Activated B cell treated with CpG ODN at 0.5 μM for 24 hours (primary cell): ENCODE measurements at regions of chr17 and their contacts with region 1.

Region 1: DNA sequence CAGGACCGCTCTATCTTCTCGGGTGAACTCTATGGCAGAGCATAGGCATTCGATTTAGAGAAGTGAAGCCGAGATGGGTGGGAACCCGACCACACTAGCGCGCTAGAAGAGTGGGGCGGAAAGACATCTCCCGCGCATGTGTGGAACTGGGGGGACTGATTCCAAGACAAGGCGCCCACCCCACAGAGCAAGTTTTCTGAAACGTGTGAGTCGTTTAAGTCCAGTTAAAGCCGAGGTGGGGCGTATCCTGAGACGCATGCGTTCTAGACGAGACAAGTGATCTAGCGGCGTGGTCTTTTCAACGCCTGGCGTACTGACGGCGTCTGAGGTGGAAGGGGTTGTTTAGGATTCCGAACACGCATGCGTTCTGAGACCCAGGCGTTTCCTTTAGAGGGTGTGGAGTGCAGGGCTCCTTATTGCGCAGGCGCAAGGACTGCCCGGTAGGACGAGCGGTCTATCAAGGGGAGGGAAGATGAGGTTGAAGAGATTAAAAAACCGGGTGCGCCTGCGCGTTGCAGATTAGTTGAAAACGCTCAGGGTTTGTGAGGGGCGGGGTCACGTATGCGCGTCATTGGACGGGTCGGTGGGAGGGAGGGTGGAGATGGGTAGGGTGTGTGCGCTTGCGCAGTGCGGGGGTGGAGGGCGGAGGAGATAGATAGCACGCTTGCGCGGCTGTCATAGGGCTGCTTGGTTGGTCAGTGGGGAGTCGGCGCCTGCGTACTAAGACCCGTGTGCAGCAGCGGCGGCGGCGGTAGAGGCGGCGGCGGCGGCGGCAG is at the start of gene EIF5A:
- DNase-seq: peak; percentile 98
- ATAC-seq: peak; percentile 72
- H3K4me3 Mint-ChIP-seq: peak within 1 kb of the TSS; percentile 96
- H3K27ac Mint-ChIP-seq: peak within 1 kb of the TSS; percentile 99
- H3K4me1 Mint-ChIP-seq: peaks cover 38% of the 10 kb centered on the region
- H3K27me3 Mint-ChIP-seq: no peaks in the 10 kb centered on the region
- CTCF ChIP-seq: no peak
- total RNA-seq, gene EIF5A: 656 and 664 TPM in 2 replicates

Region 2: GRCh38 chr17:7214300-7215135 is 92.6 kb before region 1 on chr17:
- CTCF ChIA-PET with region 1: no interaction called
- POLR2A ChIA-PET with region 1: interaction called, 5 read pairs
- intact Hi-C with region 1: loop called (anchors 1 kb)
- DNase-seq: peak; percentile 98
- ATAC-seq: peak; percentile 86
- H3K4me3 Mint-ChIP-seq: peak overlapping the region; percentile 88
- H3K27ac Mint-ChIP-seq: peak overlapping the region; percentile 94
- H3K4me1 Mint-ChIP-seq: peaks cover 53% of the 10 kb centered on the region
- H3K27me3 Mint-ChIP-seq: no peaks in the 10 kb centered on the region
- CTCF ChIP-seq: no peak

Region 3: DNA sequence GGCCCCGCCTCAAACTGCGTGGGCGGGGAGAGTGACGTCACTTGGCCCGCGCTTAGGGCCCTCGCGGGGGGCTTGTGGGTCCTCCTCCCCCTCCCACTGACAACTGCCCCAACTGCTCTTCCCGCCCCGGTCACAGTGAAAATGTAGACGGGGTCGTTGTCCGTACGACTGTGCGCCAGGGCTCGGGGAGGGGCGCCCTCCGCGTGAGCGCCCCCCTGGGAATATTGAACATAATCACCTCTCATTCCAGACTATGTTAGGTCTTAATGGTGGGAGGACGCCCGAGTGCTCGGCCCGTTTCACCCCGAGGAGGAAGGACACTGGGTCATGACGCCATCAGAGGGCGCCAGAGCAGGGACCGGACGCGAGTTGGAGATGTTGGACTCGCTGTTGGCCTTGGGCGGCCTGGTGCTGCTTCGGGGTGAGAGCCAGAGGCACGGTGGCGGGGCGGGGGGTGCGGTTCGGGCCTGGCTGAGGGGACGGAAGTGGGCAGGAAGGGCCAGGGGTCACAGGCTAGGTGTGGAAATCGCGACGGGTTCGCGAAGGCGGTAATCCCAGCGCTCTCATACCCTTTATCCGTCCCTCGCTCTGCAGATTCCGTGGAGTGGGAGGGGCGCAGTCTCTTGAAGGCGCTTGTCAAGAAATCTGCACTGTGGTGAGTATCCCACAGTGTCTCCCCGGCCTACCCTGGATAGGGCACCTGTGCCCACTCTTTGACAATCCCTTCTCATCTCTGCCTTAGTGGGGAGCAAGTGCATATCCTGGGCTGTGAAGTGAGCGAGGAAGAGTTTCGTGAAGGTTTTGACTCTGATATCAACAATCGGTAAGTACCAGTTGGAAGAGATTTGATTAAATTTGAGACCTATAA is 54.7 kb before region 1 on chr17 and contains the start of gene ELP5:
- CTCF ChIA-PET with region 1: no interaction called
- POLR2A ChIA-PET with region 1: interaction called, 3 read pairs
- intact Hi-C with region 1: loop called (anchors 1 kb)
- DNase-seq: no peak
- ATAC-seq: peak; percentile 61
- H3K4me3 Mint-ChIP-seq: peak within 1 kb of the TSS; percentile 98
- H3K27ac Mint-ChIP-seq: peak within 1 kb of the TSS; percentile 100
- H3K4me1 Mint-ChIP-seq: peaks cover 44% of the 10 kb centered on the region
- H3K27me3 Mint-ChIP-seq: no peaks in the 10 kb centered on the region
- CTCF ChIP-seq: no peak
- total RNA-seq, gene ELP5: 49.2 and 53.6 TPM in 2 replicates

Region 4: DNA sequence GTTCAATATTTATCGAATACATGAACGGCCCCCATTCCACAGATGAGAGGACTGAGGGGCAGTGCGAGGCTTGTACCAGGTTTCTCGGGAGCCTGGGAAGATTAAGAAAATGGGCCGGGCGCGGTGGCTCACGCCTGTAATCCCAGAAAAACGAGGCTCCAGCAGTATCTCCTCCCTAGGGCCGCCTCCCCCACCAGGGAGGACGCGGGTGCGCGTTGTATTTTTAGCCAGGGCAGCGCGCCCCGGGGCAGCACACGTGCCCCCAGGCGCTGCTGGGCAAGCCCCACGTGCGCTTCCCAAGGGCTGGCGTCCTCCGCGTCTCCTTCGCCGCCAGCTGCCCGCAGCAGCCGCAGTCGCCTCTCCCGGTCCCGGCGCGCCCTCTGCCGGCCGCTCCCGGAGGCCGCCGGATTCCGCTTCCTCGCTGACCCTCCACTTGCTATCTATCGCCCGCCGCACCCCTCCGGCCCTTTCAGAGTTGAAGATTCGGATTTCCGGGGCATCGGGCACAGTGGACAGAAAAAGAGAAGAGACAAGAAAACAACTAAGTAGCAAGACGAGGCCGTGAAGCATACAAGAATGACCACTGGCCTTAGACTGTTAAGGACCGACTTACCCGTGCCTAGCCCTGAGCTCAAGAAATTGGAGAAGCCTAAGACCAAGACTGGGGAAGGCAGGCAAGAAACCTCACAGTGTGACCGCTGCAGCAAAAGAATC is 10.8 kb before region 1 on chr17:
- CTCF ChIA-PET with region 1: interaction called, 12 read pairs
- POLR2A ChIA-PET with region 1: interaction called, 5 read pairs
- intact Hi-C with region 1: no loop called
- DNase-seq: peak; percentile 75
- ATAC-seq: peak; percentile 49
- H3K4me3 Mint-ChIP-seq: peak overlapping the region; percentile 32
- H3K27ac Mint-ChIP-seq: no peak overlapping the region
- H3K4me1 Mint-ChIP-seq: peaks cover 24% of the 10 kb centered on the region
- H3K27me3 Mint-ChIP-seq: peaks cover 18% of the 10 kb centered on the region
- CTCF ChIP-seq: peak; percentile 29

Region 5: DNA sequence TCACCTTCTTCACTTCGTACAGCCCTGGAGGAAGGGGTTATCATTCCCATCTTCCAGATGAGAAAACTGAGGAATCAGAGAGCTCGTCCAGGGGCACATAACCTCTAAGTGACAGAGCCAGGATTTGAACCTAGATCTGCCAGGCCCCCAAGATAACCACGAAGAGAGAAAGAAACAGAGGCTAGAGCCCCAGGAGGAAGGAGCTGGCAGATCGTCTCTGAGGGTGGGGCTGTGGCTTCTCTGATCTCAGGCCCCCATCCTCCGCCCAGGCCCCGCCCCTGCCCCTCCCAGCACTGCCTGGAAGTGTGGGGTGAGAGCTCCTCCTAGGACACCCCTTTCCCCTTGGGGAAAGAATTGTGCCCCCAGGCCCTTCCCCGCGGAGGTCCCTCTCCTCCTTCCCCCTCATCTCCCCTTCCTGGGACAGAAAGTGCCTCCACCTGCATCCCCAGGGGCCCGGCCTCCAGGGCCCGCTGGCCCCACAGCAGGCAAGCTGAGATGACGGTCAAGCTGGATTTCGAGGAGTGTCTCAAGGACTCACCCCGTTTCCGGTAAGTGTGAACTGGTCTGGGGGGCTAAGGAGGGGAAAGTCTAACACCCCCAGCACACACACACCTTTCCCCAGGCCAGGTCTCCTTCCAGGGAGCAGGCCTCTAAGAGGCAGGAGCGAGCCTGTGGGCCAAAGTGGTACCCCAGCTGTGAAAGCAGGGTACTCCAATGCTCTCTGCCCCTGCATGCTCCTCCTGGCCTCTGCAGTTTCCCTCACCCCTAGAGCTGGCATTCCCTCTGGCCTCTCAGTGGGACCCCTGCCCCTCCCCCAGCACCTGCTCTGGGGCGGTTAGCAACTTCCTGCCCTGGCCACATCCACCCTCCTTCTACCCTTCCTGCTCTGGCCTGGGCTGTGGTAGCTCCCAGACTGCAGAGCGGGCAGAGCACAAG is 29.4 kb after region 1 on chr17 and contains the start of gene ACAP1:
- CTCF ChIA-PET with region 1: interaction called, 4 read pairs
- POLR2A ChIA-PET with region 1: interaction called, 35 read pairs
- intact Hi-C with region 1: no loop called
- DNase-seq: peak; percentile 67
- ATAC-seq: peak; percentile 96
- H3K4me3 Mint-ChIP-seq: peak within 1 kb of the TSS; percentile 85
- H3K27ac Mint-ChIP-seq: peak within 1 kb of the TSS; percentile 98
- H3K4me1 Mint-ChIP-seq: peaks cover 49% of the 10 kb centered on the region
- H3K27me3 Mint-ChIP-seq: no peaks in the 10 kb centered on the region
- CTCF ChIP-seq: no peak
- total RNA-seq, gene ACAP1: 298 and 328 TPM in 2 replicates

Region 6: GRCh38 chr17:7460850-7461660 is 154.0 kb after region 1 on chr17:
- CTCF ChIA-PET with region 1: no interaction called
- POLR2A ChIA-PET with region 1: interaction called, 10 read pairs
- intact Hi-C with region 1: no loop called
- DNase-seq: no peak
- ATAC-seq: no peak
- H3K4me3 Mint-ChIP-seq: no peak overlapping the region
- H3K27ac Mint-ChIP-seq: no peak overlapping the region
- H3K4me1 Mint-ChIP-seq: peaks cover 6% of the 10 kb centered on the region
- H3K27me3 Mint-ChIP-seq: no peaks in the 10 kb centered on the region
- CTCF ChIP-seq: no peak

Region 7: GRCh38 chr17:7538891-7539290 is 231.8 kb after region 1 on chr17:
- CTCF ChIA-PET with region 1: no interaction called
- POLR2A ChIA-PET with region 1: no interaction called
- intact Hi-C with region 1: no loop called
- DNase-seq: no peak
- ATAC-seq: no peak
- H3K4me3 Mint-ChIP-seq: no peak overlapping the region
- H3K27ac Mint-ChIP-seq: no peak overlapping the region
- H3K4me1 Mint-ChIP-seq: no peaks in the 10 kb centered on the region
- H3K27me3 Mint-ChIP-seq: no peaks in the 10 kb centered on the region
- CTCF ChIP-seq: no peak